ENCODE measurements at regions of chr18 and their contacts with region 1.

Region 1: DNA sequence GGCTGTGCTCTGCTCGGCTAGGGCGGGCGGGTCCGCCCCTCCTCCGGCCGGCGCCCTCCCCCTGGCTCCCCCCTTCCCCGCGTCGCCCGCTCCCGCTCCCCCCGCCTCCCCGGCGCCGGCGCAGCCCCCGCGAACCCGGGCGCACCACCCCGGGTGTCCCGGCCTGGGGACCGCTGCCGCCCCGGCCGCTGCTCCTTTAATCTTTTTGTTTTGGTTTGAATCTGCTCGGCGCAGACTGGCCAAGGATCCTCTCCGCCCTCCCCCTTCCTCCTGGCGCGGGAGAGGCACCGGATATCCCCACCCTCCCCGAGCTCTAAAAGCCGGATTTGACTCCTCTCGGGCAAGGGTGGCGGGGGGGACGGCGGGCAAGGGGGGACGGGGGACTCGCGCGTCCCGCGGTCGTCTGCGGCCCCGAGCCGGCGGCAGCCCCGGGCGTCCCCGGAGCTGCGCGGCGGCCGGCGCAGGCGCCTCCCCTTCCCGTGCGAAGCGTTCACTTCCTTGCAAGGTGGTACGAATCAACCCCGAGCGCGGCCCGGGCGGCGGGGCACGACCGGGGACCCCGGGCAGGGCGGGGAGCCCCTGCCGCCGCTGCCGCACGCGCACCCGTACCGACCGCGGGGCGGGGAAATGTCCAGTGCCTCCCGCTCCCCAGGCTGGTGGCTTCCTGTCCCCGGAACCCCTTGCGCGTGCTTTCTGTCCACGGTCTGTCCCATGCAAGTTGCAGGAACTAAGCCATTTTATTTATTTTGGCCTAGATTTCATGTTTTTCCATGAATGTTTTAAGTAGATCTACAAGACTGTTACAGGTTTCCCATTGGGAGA is at the start of gene PTGR3:
- DNase-seq: peak; percentile 73
- ATAC-seq: peak; percentile 57
- H3K4me3 ChIP-seq: peak within 1 kb of the TSS; percentile 90
- H3K27ac ChIP-seq: peak within 1 kb of the TSS; percentile 98
- H3K4me1 ChIP-seq: peaks cover 5% of the 10 kb centered on the region
- H3K27me3 ChIP-seq: no peaks in the 10 kb centered on the region
- CTCF ChIP-seq: no peak
- POLR2A ChIP-seq: no peak; the same call in 1 of the 2 replicates
- RAD21 ChIP-seq: no peak
- total RNA-seq, gene PTGR3: 16.1 and 16.9 TPM in 2 replicates

Region 2: GRCh38 chr18:74652392-74652988 is 556.9 kb before region 1 on chr18:
- CTCF ChIA-PET with region 1: no interaction called
- POLR2A ChIA-PET with region 1: no interaction called
- dilution Hi-C with region 1: no loop called
- in situ Hi-C with region 1: no loop called
- intact Hi-C with region 1: loop called (anchors 1 kb)
- DNase-seq: peak; percentile 66
- ATAC-seq: peak; percentile 75
- H3K4me3 ChIP-seq: no peak overlapping the region
- H3K27ac ChIP-seq: no peak overlapping the region
- H3K4me1 ChIP-seq: peaks cover 6% of the 10 kb centered on the region
- H3K27me3 ChIP-seq: no peaks in the 10 kb centered on the region
- CTCF ChIP-seq: peak; percentile 73
- POLR2A ChIP-seq: no peak
- RAD21 ChIP-seq: peak; percentile 77

Region 3: GRCh38 chr18:74856928-74857327 is 352.4 kb before region 1 on chr18:
- CTCF ChIA-PET with region 1: no interaction called
- POLR2A ChIA-PET with region 1: no interaction called
- dilution Hi-C with region 1: no loop called
- in situ Hi-C with region 1: no loop called
- intact Hi-C with region 1: no loop called
- DNase-seq: no peak
- ATAC-seq: no peak
- H3K4me3 ChIP-seq: no peak overlapping the region
- H3K27ac ChIP-seq: no peak overlapping the region
- H3K4me1 ChIP-seq: peaks cover 3% of the 10 kb centered on the region; the same call in 1 of the 2 replicates
- H3K27me3 ChIP-seq: no peaks in the 10 kb centered on the region
- CTCF ChIP-seq: no peak
- POLR2A ChIP-seq: no peak
- RAD21 ChIP-seq: no peak

Region 4: GRCh38 chr18:75105551-75106254 is 103.6 kb before region 1 on chr18:
- CTCF ChIA-PET with region 1: no interaction called
- POLR2A ChIA-PET with region 1: interaction called, 12 read pairs
- dilution Hi-C with region 1: no loop called
- in situ Hi-C with region 1: no loop called
- intact Hi-C with region 1: no loop called
- DNase-seq: no peak
- ATAC-seq: no peak
- H3K4me3 ChIP-seq: no peak overlapping the region
- H3K27ac ChIP-seq: no peak overlapping the region
- H3K4me1 ChIP-seq: no peaks in the 10 kb centered on the region
- H3K27me3 ChIP-seq: peaks cover 7% of the 10 kb centered on the region; the same call in 1 of the 2 replicates
- CTCF ChIP-seq: no peak
- POLR2A ChIP-seq: no peak
- RAD21 ChIP-seq: no peak

Region 5: DNA sequence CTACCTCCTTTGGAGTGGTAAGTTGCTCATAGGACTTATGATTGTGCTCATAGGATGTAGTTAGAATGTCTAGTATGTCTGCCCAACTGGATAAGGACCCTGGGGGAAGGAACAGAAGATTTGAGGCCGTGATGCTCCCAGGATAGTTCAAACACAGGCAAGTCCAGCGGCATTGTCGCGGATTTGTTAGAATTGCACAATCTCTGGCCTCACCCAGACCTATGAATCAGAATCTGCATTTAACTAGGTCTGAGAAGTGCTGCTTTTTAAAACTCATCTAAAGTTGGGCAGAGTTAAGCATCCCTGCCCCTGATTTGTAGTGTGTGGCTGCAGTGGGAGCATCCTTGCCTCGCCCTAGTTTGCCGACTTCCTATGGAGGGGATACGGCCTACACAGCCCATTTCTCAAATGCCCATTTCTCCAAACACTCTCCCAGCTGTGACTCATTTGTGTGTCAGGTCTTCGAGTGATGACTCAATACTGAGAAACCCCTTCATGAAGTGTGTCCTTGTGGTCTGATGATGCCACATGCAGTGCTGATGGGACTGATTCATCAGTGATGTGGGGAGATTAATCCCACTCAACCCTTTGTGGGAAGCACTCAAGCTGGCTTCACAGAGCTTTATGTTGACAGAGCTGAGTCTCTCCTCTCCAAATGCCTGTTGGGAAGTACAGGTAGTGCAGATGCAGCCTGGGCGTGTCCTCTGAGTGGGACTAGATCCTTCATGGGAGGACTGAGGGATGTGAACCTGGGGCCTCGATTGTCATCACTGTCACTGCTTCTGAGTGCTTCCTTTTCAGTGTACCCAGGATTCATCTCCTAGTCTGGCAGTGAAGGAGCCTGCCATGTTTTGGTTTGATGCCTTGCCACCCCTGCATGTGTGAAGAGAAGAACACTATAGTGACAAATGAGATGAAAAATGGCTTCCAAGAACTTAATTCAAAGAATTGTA is 199.5 kb after region 1 on chr18:
- CTCF ChIA-PET with region 1: no interaction called
- POLR2A ChIA-PET with region 1: interaction called, 3 read pairs
- dilution Hi-C with region 1: no loop called
- in situ Hi-C with region 1: no loop called
- intact Hi-C with region 1: loop called (anchors 5 kb)
- DNase-seq: peak; percentile 100
- ATAC-seq: peak; percentile 90
- H3K4me3 ChIP-seq: no peak overlapping the region
- H3K27ac ChIP-seq: peak overlapping the region; percentile 32
- H3K4me1 ChIP-seq: peaks cover 13% of the 10 kb centered on the region
- H3K27me3 ChIP-seq: no peaks in the 10 kb centered on the region
- CTCF ChIP-seq: no peak
- POLR2A ChIP-seq: no peak
- RAD21 ChIP-seq: no peak

Region 6: DNA sequence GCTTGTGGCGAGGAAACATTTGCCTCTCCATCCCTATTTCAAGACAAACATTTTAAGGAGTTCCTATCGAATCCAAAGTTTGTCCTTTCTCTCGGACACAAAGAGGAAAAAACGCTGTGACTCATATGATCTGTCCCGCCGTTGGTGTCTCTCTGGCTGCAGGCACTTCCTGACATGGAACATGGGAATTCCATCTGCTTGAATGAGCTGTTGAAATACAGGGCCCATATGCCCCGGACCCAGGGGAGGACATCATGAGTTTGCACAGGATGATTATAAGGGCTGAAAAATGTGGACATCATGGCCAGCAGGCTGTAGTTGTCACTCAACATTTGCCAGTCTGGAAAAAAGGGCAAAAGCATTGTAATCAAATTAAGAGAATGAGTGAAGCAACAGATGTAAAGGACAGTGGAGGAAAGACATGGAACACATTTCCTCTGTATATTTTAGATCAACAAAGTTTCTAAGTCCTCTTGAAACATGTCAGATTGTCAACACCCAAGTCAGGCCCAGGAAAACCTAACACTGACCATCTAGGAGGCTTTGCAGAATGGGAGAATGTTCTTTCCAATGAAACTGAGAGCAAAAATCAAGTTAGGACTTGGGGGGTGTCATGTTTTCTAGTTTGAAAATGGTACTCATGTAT is 321.3 kb after region 1 on chr18:
- CTCF ChIA-PET with region 1: no interaction called
- POLR2A ChIA-PET with region 1: no interaction called
- dilution Hi-C with region 1: no loop called
- in situ Hi-C with region 1: no loop called
- intact Hi-C with region 1: no loop called
- DNase-seq: peak; percentile 22
- ATAC-seq: peak; percentile 27
- H3K4me3 ChIP-seq: no peak overlapping the region
- H3K27ac ChIP-seq: peak overlapping the region; percentile 5; the same call in 1 of the 2 replicates
- H3K4me1 ChIP-seq: peaks cover 20% of the 10 kb centered on the region
- H3K27me3 ChIP-seq: peaks cover 4% of the 10 kb centered on the region
- CTCF ChIP-seq: no peak
- POLR2A ChIP-seq: no peak
- RAD21 ChIP-seq: no peak

Region 7: GRCh38 chr18:75638776-75639471 is 429.6 kb after region 1 on chr18:
- CTCF ChIA-PET with region 1: no interaction called
- POLR2A ChIA-PET with region 1: no interaction called
- dilution Hi-C with region 1: no loop called
- in situ Hi-C with region 1: no loop called
- intact Hi-C with region 1: loop called (anchors 2 kb)
- DNase-seq: peak; percentile 55
- ATAC-seq: peak; percentile 69
- H3K4me3 ChIP-seq: peak overlapping the region; percentile 32
- H3K27ac ChIP-seq: peak overlapping the region; percentile 61; the same call in 1 of the 2 replicates
- H3K4me1 ChIP-seq: no peaks in the 10 kb centered on the region
- H3K27me3 ChIP-seq: no peaks in the 10 kb centered on the region; the same call in 1 of the 2 replicates
- CTCF ChIP-seq: no peak
- POLR2A ChIP-seq: no peak
- RAD21 ChIP-seq: no peak

Region 8: DNA sequence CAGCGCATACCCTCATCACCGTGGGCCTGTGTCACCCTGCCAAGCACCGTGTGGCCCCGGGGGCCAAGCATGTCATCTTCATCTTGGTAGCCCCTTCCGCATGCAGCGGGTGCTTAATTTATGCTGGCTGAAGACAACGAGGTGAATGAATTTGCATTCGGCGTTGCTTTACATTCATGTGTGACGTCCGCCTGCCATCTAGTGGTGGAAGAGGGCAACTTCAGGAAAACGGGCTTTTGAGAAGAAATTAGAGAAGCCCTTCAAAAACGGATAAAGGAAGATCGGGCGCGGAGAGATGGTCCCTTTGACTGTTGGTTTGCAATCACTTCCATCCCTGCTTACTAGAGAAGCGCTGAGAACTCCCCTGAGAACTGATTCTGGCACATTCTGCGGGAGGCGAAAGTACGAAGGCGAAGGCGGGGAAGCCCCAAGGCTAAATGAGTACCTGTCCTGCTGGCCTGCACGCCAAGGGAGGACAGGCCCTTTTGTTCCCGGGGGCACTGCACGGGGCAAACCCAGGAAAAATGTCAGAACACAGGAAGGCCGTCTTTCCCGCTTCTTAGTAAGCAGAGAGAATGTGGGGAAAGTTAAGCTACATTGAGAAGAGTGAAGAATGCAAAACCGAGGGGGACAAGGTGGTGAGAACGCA is 1139.9 kb after region 1 on chr18:
- CTCF ChIA-PET with region 1: no interaction called
- POLR2A ChIA-PET with region 1: no interaction called
- dilution Hi-C with region 1: no loop called
- in situ Hi-C with region 1: loop called (anchors 25 kb)
- intact Hi-C with region 1: loop called (anchors 5 kb)
- DNase-seq: peak; percentile 67
- ATAC-seq: peak; percentile 40
- H3K4me3 ChIP-seq: no peak overlapping the region
- H3K27ac ChIP-seq: no peak overlapping the region
- H3K4me1 ChIP-seq: peaks cover under 1% of the 10 kb centered on the region; the same call in 1 of the 2 replicates
- H3K27me3 ChIP-seq: no peaks in the 10 kb centered on the region
- CTCF ChIP-seq: peak; percentile 88
- POLR2A ChIP-seq: no peak
- RAD21 ChIP-seq: peak; percentile 89